Activated CD4-positive, alpha-beta T cell treated with anti-CD3 and anti-CD28 coated beads, Interleukin-2, amount 10 ng/mL, durations not matched to agents 7 days and 5 days (primary cell): ENCODE measurements at regions of chr5 and their contacts with region 1.

Region 1: DNA sequence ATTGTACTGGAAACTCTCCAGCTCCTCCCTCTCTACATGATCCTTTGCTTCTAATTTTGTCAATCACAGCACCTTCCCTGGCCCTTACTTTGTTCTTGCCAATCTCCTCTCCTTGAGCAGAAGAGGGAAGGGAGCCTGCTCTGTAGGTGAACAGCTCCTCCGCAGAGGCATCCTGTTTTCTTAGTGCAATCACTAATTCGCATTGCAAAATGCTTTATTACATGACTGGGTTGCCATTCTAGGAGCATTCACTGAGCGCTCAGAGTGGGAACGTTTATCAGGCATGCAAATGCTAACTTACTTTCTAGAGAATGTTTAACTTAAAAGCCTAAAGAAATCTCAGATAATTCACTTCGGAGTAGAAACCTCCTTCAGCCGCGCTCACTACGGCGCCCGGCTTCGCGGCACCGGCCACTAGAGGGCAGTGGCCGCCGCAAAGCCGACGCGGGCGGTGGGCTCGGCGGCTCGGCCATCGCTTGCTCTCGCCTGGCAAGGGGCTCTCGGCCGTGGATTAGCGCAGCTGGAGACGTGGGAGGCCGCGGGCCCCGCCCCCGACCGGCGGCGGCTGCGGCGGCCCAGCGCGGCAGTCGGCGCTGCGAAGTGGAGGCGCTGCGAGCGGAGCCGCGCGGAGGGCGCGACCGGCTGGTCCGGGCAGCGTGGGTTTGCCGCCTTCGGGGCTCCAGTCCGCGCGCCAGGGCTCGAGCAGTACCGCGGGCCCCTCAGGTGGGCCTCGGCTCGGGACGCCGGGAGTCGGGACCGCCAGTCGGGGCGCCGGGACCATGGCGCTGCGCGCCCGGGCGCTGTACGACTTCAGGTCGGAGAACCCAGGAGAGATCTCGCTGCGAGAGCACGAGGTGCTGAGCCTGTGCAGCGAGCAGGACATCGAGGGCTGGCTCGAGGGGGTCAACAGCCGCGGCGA is at the start of gene SNX18:
- DNase-seq: peak; percentile 92
- H3K4me3 Mint-ChIP-seq: peak within 1 kb of the TSS; percentile 80
- H3K27ac Mint-ChIP-seq: peak within 1 kb of the TSS; percentile 33
- H3K4me1 Mint-ChIP-seq: peaks cover 42% of the 10 kb centered on the region
- H3K27me3 Mint-ChIP-seq: peaks cover 19% of the 10 kb centered on the region
- total RNA-seq, gene SNX18: 19.0 to 19.7 TPM

Region 2: DNA sequence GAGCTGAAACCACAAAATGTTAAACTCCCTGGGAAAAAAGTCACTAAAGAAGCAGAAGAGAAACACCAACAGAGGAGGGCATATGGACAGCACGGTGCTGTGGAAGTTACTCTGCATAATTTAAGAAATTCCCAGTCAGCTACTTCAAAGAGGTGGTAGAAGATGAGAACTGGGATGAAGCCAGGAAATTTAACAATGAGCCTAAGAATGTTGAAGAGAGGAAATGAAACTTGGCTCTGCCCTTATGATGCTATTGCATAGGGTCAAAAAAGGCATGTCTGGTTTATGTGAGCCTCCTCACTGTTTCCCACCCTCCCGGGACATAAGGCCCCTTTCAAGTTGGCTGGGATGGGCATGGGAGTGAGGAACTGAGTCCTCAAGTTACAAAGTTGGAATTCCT is 25.3 kb before region 1 on chr5:
- CTCF ChIA-PET with region 1: interaction called, 11 read pairs
- POLR2A ChIA-PET with region 1: no interaction called
- DNase-seq: no peak
- H3K4me3 Mint-ChIP-seq: no peak overlapping the region
- H3K27ac Mint-ChIP-seq: no peak overlapping the region
- H3K4me1 Mint-ChIP-seq: no peaks in the 10 kb centered on the region
- H3K27me3 Mint-ChIP-seq: peaks cover 10% of the 10 kb centered on the region

Region 3: DNA sequence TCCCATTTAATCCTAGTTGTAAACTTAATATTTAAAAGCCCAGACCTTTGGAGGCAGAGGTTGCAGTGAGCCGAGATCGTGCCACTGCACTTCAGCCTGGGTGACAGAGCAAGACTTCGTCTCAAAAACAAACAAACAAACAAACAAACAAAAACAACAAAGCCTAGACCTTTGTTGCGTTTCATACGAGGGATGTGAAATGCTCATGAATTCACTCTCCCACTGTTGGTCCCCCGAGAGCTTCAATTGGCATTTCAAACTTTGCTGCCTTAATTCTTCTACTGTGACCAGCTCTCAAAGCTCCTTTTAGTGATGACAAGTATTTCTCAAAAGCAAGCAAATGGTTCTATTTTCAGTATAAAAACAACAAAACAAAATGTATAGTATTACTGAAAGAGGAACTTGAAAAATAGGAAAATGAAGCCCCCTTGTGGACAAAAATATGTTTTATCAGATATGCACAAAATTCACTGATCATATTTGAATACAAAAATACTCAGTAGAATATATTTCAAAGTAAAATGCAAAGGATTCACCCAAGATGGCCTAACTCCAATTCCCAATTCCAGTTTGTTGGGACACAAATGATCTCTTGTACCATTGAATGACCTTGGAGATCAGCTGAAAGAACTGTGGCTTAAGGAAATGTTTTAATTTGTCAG is 327.6 kb after region 1 on chr5:
- CTCF ChIA-PET with region 1: interaction called, 43 read pairs
- POLR2A ChIA-PET with region 1: no interaction called
- DNase-seq: no peak
- H3K4me3 Mint-ChIP-seq: no peak overlapping the region
- H3K27ac Mint-ChIP-seq: no peak overlapping the region
- H3K4me1 Mint-ChIP-seq: peaks cover 8% of the 10 kb centered on the region
- H3K27me3 Mint-ChIP-seq: peaks cover 21% of the 10 kb centered on the region

Region 4: DNA sequence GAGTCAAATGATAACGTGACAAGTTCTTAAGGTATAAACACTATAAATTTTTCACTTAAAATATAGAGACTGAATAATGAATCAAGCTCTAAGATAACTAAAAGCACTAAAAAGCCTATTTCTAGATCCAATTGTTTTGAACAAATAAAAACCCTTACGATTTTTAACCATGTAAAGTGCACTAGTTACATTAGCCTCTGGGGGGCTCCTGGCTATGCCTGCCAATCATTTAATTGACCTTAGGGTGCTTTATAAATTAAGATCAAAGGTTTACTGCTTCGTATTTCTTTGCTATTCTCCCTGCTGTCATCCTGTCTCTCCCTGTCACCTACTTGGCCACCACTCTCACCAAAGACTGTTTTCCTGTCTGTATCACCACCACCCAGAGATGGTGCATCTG is 334.6 kb after region 1 on chr5:
- CTCF ChIA-PET with region 1: interaction called, 10 read pairs
- POLR2A ChIA-PET with region 1: interaction called, 3 read pairs
- DNase-seq: no peak
- H3K4me3 Mint-ChIP-seq: no peak overlapping the region
- H3K27ac Mint-ChIP-seq: no peak overlapping the region
- H3K4me1 Mint-ChIP-seq: no peaks in the 10 kb centered on the region
- H3K27me3 Mint-ChIP-seq: peaks cover 44% of the 10 kb centered on the region

Region 5: GRCh38 chr5:54867310-54867944 is 350.0 kb after region 1 on chr5:
- CTCF ChIA-PET with region 1: interaction called, 42 read pairs
- POLR2A ChIA-PET with region 1: no interaction called
- DNase-seq: peak; percentile 26
- H3K4me3 Mint-ChIP-seq: no peak overlapping the region
- H3K27ac Mint-ChIP-seq: no peak overlapping the region
- H3K4me1 Mint-ChIP-seq: peaks cover 29% of the 10 kb centered on the region
- H3K27me3 Mint-ChIP-seq: peaks cover 54% of the 10 kb centered on the region

Region 6: DNA sequence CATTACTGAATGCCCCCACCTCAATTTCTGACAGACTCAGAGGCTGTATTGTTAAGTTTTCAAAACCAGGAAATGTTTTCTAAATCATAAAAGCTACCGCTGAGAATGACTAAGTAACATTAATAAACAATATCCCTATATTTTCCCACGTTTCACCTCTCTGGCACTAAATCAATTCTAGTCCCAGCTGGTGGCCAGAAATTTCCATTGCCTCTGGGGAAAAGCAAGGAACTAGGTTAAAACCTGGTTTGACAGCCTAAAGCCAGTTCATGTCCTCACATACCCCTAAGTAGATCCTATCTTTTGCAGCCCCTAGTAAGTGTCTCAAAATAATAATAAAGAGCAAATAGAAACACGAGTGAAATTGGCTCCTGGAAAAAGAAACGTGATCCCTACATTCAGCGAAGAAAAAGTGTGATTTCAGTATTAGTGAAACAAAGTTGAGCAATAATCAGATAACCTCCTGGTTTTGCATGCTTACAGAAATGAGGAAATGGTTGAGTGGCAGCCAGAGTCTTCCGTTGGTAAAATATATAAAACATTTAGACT is 357.0 kb after region 1 on chr5:
- CTCF ChIA-PET with region 1: interaction called, 17 read pairs
- POLR2A ChIA-PET with region 1: no interaction called
- DNase-seq: no peak
- H3K4me3 Mint-ChIP-seq: no peak overlapping the region
- H3K27ac Mint-ChIP-seq: no peak overlapping the region
- H3K4me1 Mint-ChIP-seq: peaks cover 11% of the 10 kb centered on the region
- H3K27me3 Mint-ChIP-seq: peaks cover 66% of the 10 kb centered on the region

Region 7: GRCh38 chr5:54895816-54896341 is 378.4 kb after region 1 on chr5:
- CTCF ChIA-PET with region 1: interaction called, 19 read pairs
- POLR2A ChIA-PET with region 1: no interaction called
- DNase-seq: peak; percentile 25
- H3K4me3 Mint-ChIP-seq: no peak overlapping the region
- H3K27ac Mint-ChIP-seq: no peak overlapping the region
- H3K4me1 Mint-ChIP-seq: peaks cover 4% of the 10 kb centered on the region
- H3K27me3 Mint-ChIP-seq: peaks cover 70% of the 10 kb centered on the region